MCF 10A (cell line): ENCODE measurements at regions of chr2 and their contacts with region 1.

Region 1: DNA sequence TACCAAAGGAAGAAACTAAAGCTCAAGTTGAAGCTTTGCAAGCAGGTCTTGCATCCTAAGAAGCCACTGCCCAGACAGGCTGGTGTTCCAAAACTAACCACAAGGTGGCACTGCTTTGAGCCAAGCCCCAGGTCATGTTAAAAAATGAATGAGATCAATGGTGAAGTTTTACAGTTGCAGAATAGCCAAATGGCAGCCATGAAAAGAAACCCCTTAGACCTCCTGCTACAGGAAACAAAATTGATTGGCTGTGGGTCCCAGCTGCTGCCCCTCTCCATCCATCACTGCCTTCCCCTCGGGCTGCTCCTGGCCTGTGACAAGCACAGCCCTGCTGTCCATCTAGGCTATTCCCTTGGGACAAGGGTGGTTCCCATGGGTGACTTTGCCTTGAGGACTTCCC is 20.7 kb upstream of the MREG start:
- DNase-seq: peak; percentile 64
- H3K4me3 Mint-ChIP-seq: no peak overlapping the region
- H3K27ac Mint-ChIP-seq: no peak overlapping the region
- H3K4me1 Mint-ChIP-seq: peaks cover 15% of the 10 kb centered on the region
- H3K27me3 Mint-ChIP-seq: no peaks in the 10 kb centered on the region
- CTCF ChIP-seq: peak; percentile 74

Region 2: GRCh38 chr2:215949991-215950404 is 84.1 kb before region 1 on chr2:
- CTCF ChIA-PET with region 1: interaction called, 11 read pairs
- POLR2A ChIA-PET with region 1: no interaction called
- intact Hi-C with region 1: no loop called
- DNase-seq: peak; percentile 64
- H3K4me3 Mint-ChIP-seq: no peak overlapping the region
- H3K27ac Mint-ChIP-seq: no peak overlapping the region
- H3K4me1 Mint-ChIP-seq: no peaks in the 10 kb centered on the region
- H3K27me3 Mint-ChIP-seq: no peaks in the 10 kb centered on the region
- CTCF ChIP-seq: peak; percentile 56

Region 3: GRCh38 chr2:215973954-215974702 is 59.9 kb before region 1 on chr2:
- CTCF ChIA-PET with region 1: no interaction called
- POLR2A ChIA-PET with region 1: no interaction called
- intact Hi-C with region 1: no loop called
- DNase-seq: peak; percentile 88
- H3K4me3 Mint-ChIP-seq: no peak overlapping the region
- H3K27ac Mint-ChIP-seq: no peak overlapping the region
- H3K4me1 Mint-ChIP-seq: peaks cover 20% of the 10 kb centered on the region
- H3K27me3 Mint-ChIP-seq: no peaks in the 10 kb centered on the region
- CTCF ChIP-seq: no peak

Region 4: GRCh38 chr2:216023055-216023648 is 10.9 kb before region 1 on chr2:
- CTCF ChIA-PET with region 1: interaction called, 70 read pairs
- POLR2A ChIA-PET with region 1: interaction called, 3 read pairs
- intact Hi-C with region 1: no loop called
- DNase-seq: peak; percentile 70
- H3K4me3 Mint-ChIP-seq: no peak overlapping the region
- H3K27ac Mint-ChIP-seq: no peak overlapping the region
- H3K4me1 Mint-ChIP-seq: no peaks in the 10 kb centered on the region
- H3K27me3 Mint-ChIP-seq: no peaks in the 10 kb centered on the region
- CTCF ChIP-seq: peak; percentile 55

Region 5: GRCh38 chr2:216051350-216051749 is 17.3 kb after region 1 on chr2:
- CTCF ChIA-PET with region 1: interaction called, 39 read pairs
- POLR2A ChIA-PET with region 1: interaction called, 3 read pairs
- intact Hi-C with region 1: no loop called
- DNase-seq: no peak
- H3K4me3 Mint-ChIP-seq: no peak overlapping the region
- H3K27ac Mint-ChIP-seq: no peak overlapping the region
- H3K4me1 Mint-ChIP-seq: no peaks in the 10 kb centered on the region
- H3K27me3 Mint-ChIP-seq: no peaks in the 10 kb centered on the region
- CTCF ChIP-seq: no peak

Region 6: GRCh38 chr2:216108967-216109921 is 75.2 kb after region 1 on chr2 and contains the start of gene XRCC5:
- CTCF ChIA-PET with region 1: interaction called, 3 read pairs
- POLR2A ChIA-PET with region 1: no interaction called
- intact Hi-C with region 1: loop called (anchors 10 kb)
- DNase-seq: peak; percentile 95
- H3K4me3 Mint-ChIP-seq: peak within 1 kb of the TSS; percentile 100
- H3K27ac Mint-ChIP-seq: peak within 1 kb of the TSS; percentile 100
- H3K4me1 Mint-ChIP-seq: peaks cover 24% of the 10 kb centered on the region
- H3K27me3 Mint-ChIP-seq: no peaks in the 10 kb centered on the region
- CTCF ChIP-seq: no peak
- total RNA-seq, gene XRCC5: 159 and 198 TPM in 2 replicates

Region 7: DNA sequence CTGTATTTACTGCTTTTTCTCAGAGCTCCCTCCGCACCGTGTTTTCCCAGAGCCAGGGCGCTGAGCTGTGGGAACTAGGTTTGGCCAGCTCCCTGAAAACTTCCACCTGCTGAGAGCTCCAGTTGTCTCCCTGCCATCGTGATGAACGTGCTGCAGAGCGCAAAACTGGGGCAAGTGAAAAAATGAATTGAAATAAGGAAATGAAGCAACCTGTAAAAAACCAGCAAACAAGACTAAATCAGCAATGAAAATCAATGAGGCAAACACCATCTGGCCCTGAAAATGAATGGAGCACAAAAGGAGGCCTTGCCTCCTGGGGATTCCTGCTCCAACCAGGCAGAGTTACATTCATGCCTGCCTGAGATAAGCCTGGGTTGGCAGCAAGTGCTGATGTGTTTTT is 208.3 kb after region 1 on chr2:
- CTCF ChIA-PET with region 1: no interaction called
- POLR2A ChIA-PET with region 1: no interaction called
- intact Hi-C with region 1: no loop called
- DNase-seq: no peak
- H3K4me3 Mint-ChIP-seq: no peak overlapping the region
- H3K27ac Mint-ChIP-seq: no peak overlapping the region
- H3K4me1 Mint-ChIP-seq: no peaks in the 10 kb centered on the region
- H3K27me3 Mint-ChIP-seq: no peaks in the 10 kb centered on the region
- CTCF ChIP-seq: no peak